ENCODE measurements at regions of chr9 and their contacts with region 1.

Region 1: GRCh38 chr9:120477521-120478001 is 102.4 kb downstream of the CDK5RAP2 start:
- DNase-seq: peak in 1 of 2 donors; percentile 41
- ATAC-seq: peak; percentile 56 to 74 (median 64)
- H3K4me3 ChIP-seq: no peak overlapping the region
- H3K4me3 Mint-ChIP-seq: no peak overlapping the region
- H3K27ac ChIP-seq: no peak overlapping the region
- H3K27ac Mint-ChIP-seq: peak overlapping the region in 1 of 2 donors; percentile 54
- H3K4me1 ChIP-seq: no peaks in the 10 kb centered on the region
- H3K4me1 Mint-ChIP-seq: no peaks in the 10 kb centered on the region
- H3K27me3 ChIP-seq: no peaks in the 10 kb centered on the region
- H3K27me3 Mint-ChIP-seq: no peaks in the 10 kb centered on the region
- CTCF ChIP-seq: peak; percentile 72

Region 2: DNA sequence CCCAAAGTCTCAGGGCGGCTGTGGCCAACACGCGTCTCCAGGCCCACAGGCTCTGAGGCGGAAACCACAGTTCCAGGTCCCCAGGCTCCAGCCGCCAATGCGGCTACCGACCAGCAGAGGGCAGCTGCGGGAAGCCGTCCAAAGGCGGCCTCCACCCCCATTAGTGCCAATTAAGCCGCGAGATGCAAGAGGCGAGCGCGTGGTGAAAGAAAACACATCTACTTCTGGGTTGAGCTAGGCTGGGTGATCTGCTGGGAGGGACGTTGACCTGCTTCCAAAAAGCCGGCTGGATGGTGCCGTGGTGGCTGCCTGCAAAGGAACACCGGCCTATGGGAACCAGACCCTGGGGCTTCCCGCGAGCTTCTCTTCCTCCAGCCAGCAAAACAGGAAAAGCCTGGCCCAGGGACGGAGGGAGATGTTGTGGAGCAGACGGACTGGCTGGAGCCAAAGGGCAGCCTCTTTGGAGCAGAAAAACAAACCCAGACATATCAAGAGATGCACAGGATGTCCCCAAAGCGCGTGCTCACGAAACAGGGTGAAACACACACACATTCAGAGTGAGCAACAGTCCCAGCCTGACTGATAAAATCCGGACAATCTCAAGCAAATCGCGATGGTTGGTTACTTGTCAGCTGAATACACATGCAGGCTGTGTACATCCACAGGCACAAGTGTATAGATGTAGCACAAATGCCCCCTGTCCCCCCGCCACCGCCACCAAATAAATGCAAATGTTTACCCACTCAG is 921.3 kb before region 1 on chr9:
- intact Hi-C with region 1: loop called (anchors 10 kb)
- DNase-seq: peak; percentile 16 to 27
- ATAC-seq: peak in 2 of 3 donors; percentile 53 to 70
- H3K4me3 ChIP-seq: no peak overlapping the region
- H3K4me3 Mint-ChIP-seq: no peak overlapping the region
- H3K27ac ChIP-seq: no peak overlapping the region
- H3K27ac Mint-ChIP-seq: no peak overlapping the region
- H3K4me1 ChIP-seq: peaks cover 5% of the 10 kb centered on the region
- H3K4me1 Mint-ChIP-seq: no peaks in the 10 kb centered on the region
- H3K27me3 ChIP-seq: peaks cover 3% of the 10 kb centered on the region
- H3K27me3 Mint-ChIP-seq: peaks cover 6% of the 10 kb centered on the region in 2 donors
- CTCF ChIP-seq: peak; percentile 33

Region 3: GRCh38 chr9:119968836-119969707 is 508.5 kb before region 1 on chr9:
- intact Hi-C with region 1: loop called (anchors 10 kb)
- DNase-seq: peak; percentile 29 to 47
- ATAC-seq: peak; percentile 46 to 79 (median 58)
- H3K4me3 ChIP-seq: no peak overlapping the region
- H3K4me3 Mint-ChIP-seq: no peak overlapping the region
- H3K27ac ChIP-seq: no peak overlapping the region
- H3K27ac Mint-ChIP-seq: no peak overlapping the region
- H3K4me1 ChIP-seq: no peaks in the 10 kb centered on the region
- H3K4me1 Mint-ChIP-seq: peaks cover 5% of the 10 kb centered on the region in 2 donors
- H3K27me3 ChIP-seq: no peaks in the 10 kb centered on the region
- H3K27me3 Mint-ChIP-seq: peaks cover 12 to 16% of the 10 kb centered on the region in 2 donors
- CTCF ChIP-seq: peak; percentile 62

Measured in natural killer cell (primary cell).